ENCODE measurements at regions of chr19 and their contacts with region 1.

Region 1: GRCh38 chr19:12974301-12975220 is 5.2 kb downstream of the DAND5 start:
- DNase-seq: no peak
- ATAC-seq: no peak
- H3K4me3 ChIP-seq: no peak overlapping the region
- H3K27ac ChIP-seq: no peak overlapping the region
- H3K4me1 ChIP-seq: peaks cover 5% of the 10 kb centered on the region
- H3K27me3 ChIP-seq: no peaks in the 10 kb centered on the region
- CTCF ChIP-seq: no peak
- POLR2A ChIP-seq: no peak

Region 2: GRCh38 chr19:13099073-13099999 is 124.8 kb after region 1 on chr19:
- intact Hi-C with region 1: loop called (anchors 5 kb)
- DNase-seq: peak in 3 of 4 donors; percentile 49 to 76 (median 54)
- ATAC-seq: no peak
- H3K4me3 ChIP-seq: no peak overlapping the region
- H3K27ac ChIP-seq: peak overlapping the region in 2 of 4 donors; percentile 73 to 78
- H3K4me1 ChIP-seq: peaks cover 31% of the 10 kb centered on the region
- H3K27me3 ChIP-seq: peaks cover 0 to 10% of the 10 kb centered on the region in 2 donors
- CTCF ChIP-seq: no peak
- POLR2A ChIP-seq: peak in 1 of 3 donors; percentile 38

Region 3: GRCh38 chr19:13255041-13255718 is 280.6 kb after region 1 on chr19:
- intact Hi-C with region 1: loop called (anchors 10 kb)
- DNase-seq: no peak
- ATAC-seq: no peak
- H3K4me3 ChIP-seq: no peak overlapping the region
- H3K27ac ChIP-seq: no peak overlapping the region
- H3K4me1 ChIP-seq: no peaks in the 10 kb centered on the region
- H3K27me3 ChIP-seq: peaks cover 0 to 10% of the 10 kb centered on the region in 2 donors
- CTCF ChIP-seq: no peak
- POLR2A ChIP-seq: no peak

Measured in body of pancreas (tissue), 4 donors.